ENCODE measurements at regions of chr17 and their contacts with region 1.

Region 1: GRCh38 chr17:55513885-55514591 is 2.8 kb upstream of the SMIM36 start:
- DNase-seq: peak in 4 of 5 donors; percentile 74 to 90 (median 82)
- H3K4me3 ChIP-seq: no peak overlapping the region
- H3K27ac ChIP-seq: no peak overlapping the region
- H3K4me1 ChIP-seq: no peaks in the 10 kb centered on the region
- H3K27me3 ChIP-seq: no peaks in the 10 kb centered on the region
- CTCF ChIP-seq: peak; percentile 83

Region 2: GRCh38 chr17:54992797-54993639 is 521.0 kb before region 1 on chr17:
- intact Hi-C with region 1: loop called (anchors 10 kb)
- DNase-seq: peak in 2 of 5 donors; percentile 62 to 72
- H3K4me3 ChIP-seq: no peak overlapping the region
- H3K27ac ChIP-seq: no peak overlapping the region
- H3K4me1 ChIP-seq: no peaks in the 10 kb centered on the region
- H3K27me3 ChIP-seq: no peaks in the 10 kb centered on the region
- CTCF ChIP-seq: peak; percentile 58

Region 3: DNA sequence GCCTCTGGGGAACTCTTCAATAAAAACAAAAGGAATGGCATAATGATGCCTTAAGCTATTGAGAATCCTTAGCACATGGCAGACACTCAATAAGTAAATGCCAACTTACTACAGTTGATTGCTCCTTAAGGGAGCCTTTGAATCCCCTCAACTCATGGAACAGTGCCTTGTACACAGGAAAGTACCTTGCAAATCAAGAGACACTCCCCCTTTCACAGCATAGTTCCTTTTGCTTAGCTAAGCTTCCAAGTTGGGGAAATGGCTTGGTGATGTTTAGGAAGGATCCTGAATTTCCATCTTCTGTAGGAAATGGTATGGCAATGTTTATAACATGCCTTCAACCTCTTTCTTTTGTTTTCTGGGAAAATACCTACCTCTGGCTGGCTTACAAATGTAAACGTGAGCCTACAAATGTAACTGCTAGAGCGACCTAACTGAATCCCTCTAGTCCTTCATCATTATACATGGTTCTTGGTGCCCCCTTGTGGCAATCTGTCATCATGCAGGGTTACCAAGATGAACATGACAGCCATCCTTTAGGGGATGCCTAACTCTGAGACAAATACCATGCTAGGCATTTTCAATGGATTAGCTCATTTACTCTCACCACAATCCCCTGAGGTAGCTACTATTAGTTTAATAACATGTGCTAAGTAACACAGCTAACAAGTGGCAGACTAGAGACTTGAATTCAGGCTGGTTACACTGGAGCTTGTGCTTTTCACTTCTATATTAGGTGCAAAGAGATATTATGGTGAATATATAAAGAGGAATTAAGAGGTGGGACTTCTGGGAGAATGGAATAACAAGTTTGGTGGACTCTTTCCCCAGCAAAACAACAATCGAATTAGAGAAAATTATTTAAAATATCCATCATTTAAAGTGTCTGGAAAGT is 157.4 kb before region 1 on chr17:
- intact Hi-C with region 1: loop called (anchors 10 kb)
- DNase-seq: peak in 4 of 5 donors; percentile 55 to 75 (median 59)
- H3K4me3 ChIP-seq: no peak overlapping the region
- H3K27ac ChIP-seq: no peak overlapping the region
- H3K4me1 ChIP-seq: no peaks in the 10 kb centered on the region
- H3K27me3 ChIP-seq: no peaks in the 10 kb centered on the region
- CTCF ChIP-seq: peak; percentile 70

Region 4: GRCh38 chr17:55426546-55427410 is 87.3 kb before region 1 on chr17:
- intact Hi-C with region 1: no loop called
- DNase-seq: no peak
- H3K4me3 ChIP-seq: no peak overlapping the region
- H3K27ac ChIP-seq: no peak overlapping the region
- H3K4me1 ChIP-seq: peaks cover 0 to 2% (median 0%) of the 10 kb centered on the region in 3 donors
- H3K27me3 ChIP-seq: no peaks in the 10 kb centered on the region
- CTCF ChIP-seq: no peak

Measured in kidney (tissue), 22 donors.